ENCODE measurements at regions of chr6 and their contacts with region 1.

Region 1: GRCh38 chr6:50602292-50602691 is 111.0 kb upstream of the TFAP2D start:
- DNase-seq: peak; percentile 50
- H3K4me3 Mint-ChIP-seq: no peak overlapping the region
- H3K27ac Mint-ChIP-seq: no peak overlapping the region
- H3K4me1 Mint-ChIP-seq: no peaks in the 10 kb centered on the region
- H3K27me3 Mint-ChIP-seq: peaks cover 54% of the 10 kb centered on the region
- CTCF ChIP-seq: peak; percentile 61

Region 2: DNA sequence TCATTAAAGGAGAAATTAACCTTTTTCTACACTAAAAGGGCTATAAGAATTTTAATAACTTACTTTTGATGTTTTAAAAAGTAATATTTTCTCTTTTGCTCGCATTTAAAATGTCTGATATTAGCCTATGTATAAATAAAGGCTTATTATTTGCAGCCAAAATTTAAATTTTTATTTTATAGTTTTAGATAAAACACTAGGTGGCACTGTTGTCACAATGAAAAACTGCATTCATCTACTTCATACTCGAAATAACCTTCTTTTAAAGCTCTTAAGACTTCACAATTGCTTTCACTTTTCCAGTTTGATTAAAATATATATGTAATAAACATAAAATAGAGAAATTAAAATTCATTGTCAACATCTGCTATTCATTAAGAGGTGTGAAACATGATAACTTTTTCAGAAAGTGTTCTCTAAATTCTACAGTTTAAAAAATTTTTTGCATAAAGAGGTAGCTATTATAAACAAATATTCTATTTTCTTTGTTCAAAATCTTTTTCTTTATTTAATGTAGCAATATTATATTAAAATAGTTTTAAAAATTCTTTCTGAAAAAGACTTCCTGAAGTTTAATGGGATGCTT is 473.8 kb before region 1 on chr6:
- CTCF ChIA-PET with region 1: interaction called, 8 read pairs
- POLR2A ChIA-PET with region 1: no interaction called
- intact Hi-C with region 1: loop called (anchors 1 kb)
- DNase-seq: peak; percentile 23
- H3K4me3 Mint-ChIP-seq: no peak overlapping the region
- H3K27ac Mint-ChIP-seq: no peak overlapping the region
- H3K4me1 Mint-ChIP-seq: no peaks in the 10 kb centered on the region
- H3K27me3 Mint-ChIP-seq: peaks cover 73% of the 10 kb centered on the region
- CTCF ChIP-seq: peak; percentile 20

Region 3: GRCh38 chr6:50145125-50145524 is 457.2 kb before region 1 on chr6:
- CTCF ChIA-PET with region 1: no interaction called
- POLR2A ChIA-PET with region 1: no interaction called
- intact Hi-C with region 1: loop called (anchors 5 kb)
- DNase-seq: peak; percentile 12
- H3K4me3 Mint-ChIP-seq: no peak overlapping the region
- H3K27ac Mint-ChIP-seq: no peak overlapping the region
- H3K4me1 Mint-ChIP-seq: no peaks in the 10 kb centered on the region
- H3K27me3 Mint-ChIP-seq: peaks cover 35% of the 10 kb centered on the region
- CTCF ChIP-seq: peak; percentile 35

Region 4: GRCh38 chr6:50264995-50265571 is 337.2 kb before region 1 on chr6:
- CTCF ChIA-PET with region 1: interaction called, 15 read pairs
- POLR2A ChIA-PET with region 1: no interaction called
- intact Hi-C with region 1: loop called (anchors 2 kb)
- DNase-seq: peak; percentile 35
- H3K4me3 Mint-ChIP-seq: no peak overlapping the region
- H3K27ac Mint-ChIP-seq: no peak overlapping the region
- H3K4me1 Mint-ChIP-seq: no peaks in the 10 kb centered on the region
- H3K27me3 Mint-ChIP-seq: peaks cover 12% of the 10 kb centered on the region
- CTCF ChIP-seq: peak; percentile 29